ENCODE measurements at regions of chr9 and their contacts with region 1.

Region 1: GRCh38 chr9:78035383-78035993 is 3.9 kb upstream of the GNAQ start:
- DNase-seq: peak; percentile 56 to 67
- H3K4me3 ChIP-seq: no peak overlapping the region
- H3K27ac ChIP-seq: peak overlapping the region in 2 of 3 donors; percentile 36 to 42
- H3K4me1 ChIP-seq: peaks cover 21 to 23% of the 10 kb centered on the region in 2 donors
- H3K27me3 ChIP-seq: no peaks in the 10 kb centered on the region
- CTCF ChIP-seq: peak; percentile 62 to 81 (median 80)
- POLR2A ChIP-seq: no peak

Region 2: GRCh38 chr9:77433675-77434445 is 601.6 kb before region 1 on chr9:
- intact Hi-C with region 1: loop called (anchors 10 kb)
- DNase-seq: peak; percentile 72 to 75
- H3K4me3 ChIP-seq: no peak overlapping the region
- H3K27ac ChIP-seq: no peak overlapping the region
- H3K4me1 ChIP-seq: no peaks in the 10 kb centered on the region
- H3K27me3 ChIP-seq: no peaks in the 10 kb centered on the region
- CTCF ChIP-seq: peak; percentile 85 to 98 (median 96)
- POLR2A ChIP-seq: no peak

Region 3: GRCh38 chr9:77793904-77794303 is 241.6 kb before region 1 on chr9:
- intact Hi-C with region 1: no loop called
- DNase-seq: no peak
- H3K4me3 ChIP-seq: no peak overlapping the region
- H3K27ac ChIP-seq: no peak overlapping the region
- H3K4me1 ChIP-seq: peaks cover 0 to 8% of the 10 kb centered on the region in 2 donors
- H3K27me3 ChIP-seq: no peaks in the 10 kb centered on the region
- CTCF ChIP-seq: no peak
- POLR2A ChIP-seq: no peak

Region 4: GRCh38 chr9:77841739-77842386 is 193.6 kb before region 1 on chr9:
- intact Hi-C with region 1: loop called (anchors 10 kb)
- DNase-seq: no peak
- H3K4me3 ChIP-seq: no peak overlapping the region
- H3K27ac ChIP-seq: peak overlapping the region in 1 of 3 donors; percentile 21
- H3K4me1 ChIP-seq: peaks cover 9 to 25% of the 10 kb centered on the region in 2 donors
- H3K27me3 ChIP-seq: no peaks in the 10 kb centered on the region
- CTCF ChIP-seq: peak in 4 of 6 experiments; percentile 8 to 49 (median 42)
- POLR2A ChIP-seq: no peak

Region 5: DNA sequence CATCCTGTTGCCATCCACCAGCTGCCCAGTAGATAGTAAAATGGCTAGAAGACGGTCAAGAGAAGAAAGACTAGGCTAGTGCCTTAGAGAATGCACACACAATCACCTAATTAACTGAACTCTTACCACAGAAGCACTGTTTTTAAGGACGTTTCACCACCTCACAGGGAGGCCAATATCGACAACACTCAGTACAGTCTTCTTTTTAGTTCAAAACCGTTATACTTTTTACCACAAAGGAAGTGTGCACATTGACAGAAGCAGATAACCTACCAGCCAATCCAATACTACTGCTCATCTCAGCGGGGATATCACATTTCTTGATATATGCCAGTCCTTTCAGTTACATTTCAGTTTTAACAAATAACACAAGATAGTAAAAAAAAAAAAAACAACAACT is 126.2 kb before region 1 on chr9:
- intact Hi-C with region 1: no loop called
- DNase-seq: no peak
- H3K4me3 ChIP-seq: no peak overlapping the region
- H3K27ac ChIP-seq: no peak overlapping the region
- H3K4me1 ChIP-seq: peaks cover 0 to 4% of the 10 kb centered on the region in 2 donors
- H3K27me3 ChIP-seq: no peaks in the 10 kb centered on the region
- CTCF ChIP-seq: no peak
- POLR2A ChIP-seq: no peak

Measured in thyroid gland (tissue), 4 donors.